ENCODE measurements at regions of chr6 and their contacts with region 1.

Region 1: GRCh38 chr6:157677235-157677634 is 145.8 kb upstream of the SNX9 start:
- DNase-seq: no peak
- H3K4me3 ChIP-seq: no peak overlapping the region
- H3K27ac ChIP-seq: no peak overlapping the region
- H3K4me1 ChIP-seq: no peaks in the 10 kb centered on the region
- H3K27me3 ChIP-seq: no peaks in the 10 kb centered on the region
- CTCF ChIP-seq: no peak

Region 2: GRCh38 chr6:157428427-157429202 is 248.6 kb before region 1 on chr6:
- CTCF ChIA-PET with region 1: no interaction called
- POLR2A ChIA-PET with region 1: no interaction called
- intact Hi-C with region 1: no loop called
- DNase-seq: no peak
- H3K4me3 ChIP-seq: no peak overlapping the region
- H3K27ac ChIP-seq: no peak overlapping the region
- H3K4me1 ChIP-seq: peaks cover 10% of the 10 kb centered on the region
- H3K27me3 ChIP-seq: no peaks in the 10 kb centered on the region
- CTCF ChIP-seq: no peak

Region 3: GRCh38 chr6:157708928-157709327 is 31.7 kb after region 1 on chr6:
- CTCF ChIA-PET with region 1: no interaction called
- POLR2A ChIA-PET with region 1: interaction called, 16 read pairs
- intact Hi-C with region 1: no loop called
- DNase-seq: no peak
- H3K4me3 ChIP-seq: no peak overlapping the region
- H3K27ac ChIP-seq: no peak overlapping the region
- H3K4me1 ChIP-seq: no peaks in the 10 kb centered on the region
- H3K27me3 ChIP-seq: no peaks in the 10 kb centered on the region
- CTCF ChIP-seq: no peak

Region 4: DNA sequence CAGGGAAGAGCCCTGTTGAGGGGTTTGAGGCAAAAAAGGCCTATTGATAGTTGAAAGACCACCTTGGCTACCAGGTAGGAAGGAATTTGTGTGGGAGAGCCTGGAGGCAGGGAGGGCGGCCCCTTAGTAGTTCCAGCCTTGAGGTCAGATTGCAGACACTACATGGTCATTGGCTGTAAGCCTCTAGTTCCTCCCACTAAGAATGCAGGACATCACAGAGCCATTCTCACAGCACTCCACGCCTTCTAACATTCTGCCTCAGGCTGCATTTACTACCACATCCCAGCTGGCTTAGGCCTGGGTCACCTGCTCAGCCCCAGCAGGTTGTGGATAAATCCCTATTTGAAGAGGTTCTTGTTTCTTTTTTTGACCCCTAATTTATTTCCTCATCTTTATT is 54.8 kb after region 1 on chr6:
- CTCF ChIA-PET with region 1: no interaction called
- POLR2A ChIA-PET with region 1: no interaction called
- intact Hi-C with region 1: no loop called
- DNase-seq: no peak
- H3K4me3 ChIP-seq: no peak overlapping the region
- H3K27ac ChIP-seq: no peak overlapping the region
- H3K4me1 ChIP-seq: no peaks in the 10 kb centered on the region
- H3K27me3 ChIP-seq: no peaks in the 10 kb centered on the region
- CTCF ChIP-seq: no peak

Measured in A673 (cell line).